Posterior cingulate gyrus (tissue), 11 donors: ENCODE measurements at regions of chr20 and their contacts with region 1.

Region 1: DNA sequence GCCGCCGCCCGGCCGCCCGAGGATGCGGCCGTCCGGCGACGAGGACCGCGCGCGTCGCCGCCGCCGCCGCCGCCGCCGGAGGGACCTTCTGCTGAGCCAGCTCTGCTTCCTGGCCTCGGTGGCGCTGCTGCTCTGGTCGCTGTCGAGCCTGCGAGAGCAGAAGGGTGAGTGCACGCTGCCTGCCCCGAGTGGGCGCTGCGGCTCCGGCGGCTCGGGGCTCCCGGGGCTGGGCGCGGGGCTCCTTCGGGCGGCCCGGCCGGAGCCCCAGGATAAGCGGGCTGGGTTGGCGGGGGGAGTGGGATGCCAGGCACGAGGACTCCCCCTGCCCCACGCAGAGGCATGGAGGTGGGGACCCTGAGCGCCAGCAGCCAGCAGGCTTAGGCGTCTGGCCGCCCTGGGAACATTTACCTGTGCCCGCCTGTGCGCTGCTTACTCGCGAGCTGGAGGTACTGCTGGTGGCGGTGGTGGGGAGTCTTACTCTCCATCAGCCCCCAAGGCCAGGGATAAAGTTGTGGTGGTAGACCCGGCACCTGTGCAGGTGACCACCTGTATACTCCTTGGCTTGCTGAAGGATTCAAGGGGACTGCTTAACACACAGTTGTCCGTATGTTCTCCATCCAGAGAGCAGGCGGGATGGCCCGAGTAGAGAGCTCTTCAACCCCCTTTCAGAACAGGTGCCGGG is 520 bp downstream of the SLC24A3 start:
- DNase-seq: peak in 9 of 10 donors; percentile 47 to 96 (median 71)

Region 2: DNA sequence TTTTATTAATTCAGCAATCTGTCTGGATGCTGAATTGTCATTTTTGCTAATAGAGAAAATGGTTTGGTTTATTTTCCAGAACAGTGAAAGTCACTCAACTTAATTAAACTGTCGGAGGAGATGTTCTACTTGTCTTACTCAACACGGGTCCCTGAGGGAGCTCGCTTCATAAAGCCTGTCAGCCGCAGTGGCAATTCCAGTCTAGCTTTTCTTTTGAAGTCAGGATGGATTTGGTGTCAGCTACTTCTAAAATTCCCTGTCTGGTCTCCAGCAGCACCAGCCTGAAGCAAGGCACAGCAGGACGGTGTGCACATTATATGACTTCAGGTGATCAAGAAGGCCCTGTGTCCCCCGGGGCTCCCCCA is 260.9 kb after region 1 on chr20:
- intact Hi-C with region 1: no loop called
- DNase-seq: no peak

Region 3: GRCh38 chr20:19583532-19584175 is 370.7 kb after region 1 on chr20:
- intact Hi-C with region 1: loop called (anchors 5 kb)
- DNase-seq: peak in 8 of 10 donors; percentile 41 to 92 (median 53)